B cell (primary cell): ENCODE measurements at regions of chr17 and their contacts with region 1.

Region 1: DNA sequence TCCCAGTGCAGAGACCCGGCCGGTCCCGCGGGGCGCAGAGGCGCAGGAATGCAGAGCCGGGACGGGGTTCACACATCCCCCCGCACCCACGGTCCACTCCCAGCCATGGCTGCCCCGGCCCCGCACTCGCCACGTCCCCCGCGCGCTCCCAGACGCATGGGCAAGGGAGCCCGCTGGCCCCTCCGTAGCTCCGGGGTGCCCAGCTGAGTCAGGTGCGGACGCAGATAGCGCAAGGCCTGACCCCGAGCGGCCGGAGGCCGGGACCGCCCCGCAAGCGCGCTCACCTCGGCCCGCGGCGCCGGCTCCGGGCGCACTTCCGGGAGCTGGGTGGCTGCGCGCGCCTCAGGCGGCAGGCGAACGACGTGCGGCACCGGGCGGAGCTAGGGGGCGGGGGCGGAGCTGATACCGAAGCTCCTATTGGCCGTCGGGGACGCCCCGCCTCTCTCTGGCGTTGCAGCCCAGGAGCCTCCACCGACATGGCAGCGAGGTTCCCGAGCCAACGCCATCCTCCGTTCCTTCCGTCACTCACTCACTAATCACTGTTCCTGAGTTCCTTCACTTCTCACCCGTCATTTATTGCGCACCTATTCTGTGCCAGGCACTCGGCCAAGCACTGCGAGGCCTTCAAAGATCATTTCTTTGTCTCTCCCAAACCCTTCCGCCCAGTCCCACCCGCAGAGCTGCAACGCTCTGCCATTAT is at the start of gene ZNF18:
- DNase-seq: peak; percentile 96
- ATAC-seq: peak; percentile 95
- H3K4me3 ChIP-seq: peak within 1 kb of the TSS; percentile 58 to 97 (median 92)
- H3K4me3 Mint-ChIP-seq: peak within 1 kb of the TSS; percentile 90
- H3K27ac ChIP-seq: peak within 1 kb of the TSS; percentile 81 to 87
- H3K27ac Mint-ChIP-seq: peak within 1 kb of the TSS; percentile 96
- H3K4me1 ChIP-seq: peaks cover 5 to 11% of the 10 kb centered on the region in 2 donors
- H3K4me1 Mint-ChIP-seq: peaks cover 16% of the 10 kb centered on the region
- H3K27me3 ChIP-seq: no peaks in the 10 kb centered on the region
- H3K27me3 Mint-ChIP-seq: no peaks in the 10 kb centered on the region
- CTCF ChIP-seq: no peak
- total RNA-seq, gene ZNF18: 10.5 and 12.0 TPM in 2 replicates

Region 2: DNA sequence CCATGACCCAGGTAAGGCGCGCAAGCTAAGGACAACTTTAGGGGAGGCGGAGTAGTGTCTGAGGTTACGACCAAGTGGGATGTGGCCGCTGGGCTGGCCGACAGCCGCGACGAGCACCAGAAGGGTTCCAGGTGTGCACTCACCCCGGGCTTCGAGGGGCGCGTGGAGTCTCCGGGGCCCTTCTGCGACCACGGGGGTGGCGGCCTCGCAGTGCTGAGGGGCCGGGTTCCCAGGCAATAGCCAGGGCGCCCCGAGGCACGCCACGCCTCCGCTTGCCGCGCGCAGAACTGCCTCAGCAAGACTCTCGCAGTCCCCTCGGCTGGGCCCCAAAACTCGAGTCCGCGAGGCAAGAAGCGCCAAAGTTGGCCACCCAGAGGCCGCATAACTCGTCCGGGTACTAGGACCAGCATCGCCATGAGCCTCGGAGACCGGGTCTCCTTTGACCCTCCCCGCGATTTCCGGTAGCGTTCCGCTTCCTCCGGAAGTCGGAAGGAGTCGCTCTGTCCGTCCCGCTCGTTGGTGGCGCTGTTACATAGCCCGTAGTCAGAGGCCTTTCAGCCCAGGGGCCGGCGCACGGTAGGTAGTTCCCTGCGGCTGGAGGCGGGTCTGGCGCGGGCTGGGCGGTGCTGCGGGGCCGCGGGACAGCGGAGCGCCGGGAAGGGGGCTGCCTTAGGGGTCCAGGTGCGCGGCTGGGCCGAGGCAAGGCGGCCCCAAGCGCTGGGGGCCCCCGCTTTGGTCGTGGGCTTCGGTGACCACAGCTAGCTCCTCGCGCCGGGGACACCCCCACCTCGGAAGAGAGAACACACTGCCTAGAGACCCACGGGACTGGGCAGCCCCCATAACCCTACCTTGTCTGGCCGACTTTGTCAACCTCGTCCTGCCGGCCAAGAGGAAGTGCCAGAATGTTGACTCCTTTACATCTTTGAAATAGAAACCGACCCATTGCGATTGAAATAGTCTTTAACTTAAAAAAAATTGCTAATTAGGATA is 1299.9 kb before region 1 on chr17 and contains the starts of genes ADPRM and SCO1:
- CTCF ChIA-PET with region 1: no interaction called
- POLR2A ChIA-PET with region 1: no interaction called
- intact Hi-C with region 1: loop called (anchors 5 kb)
- DNase-seq: peak; percentile 93
- ATAC-seq: peak; percentile 96
- H3K4me3 ChIP-seq: peak within 1 kb of the TSS; percentile 78 to 91 (median 84)
- H3K4me3 Mint-ChIP-seq: peak within 1 kb of the TSS; percentile 93
- H3K27ac ChIP-seq: peak within 1 kb of the TSS; percentile 81 to 93
- H3K27ac Mint-ChIP-seq: peak within 1 kb of the TSS; percentile 96
- H3K4me1 ChIP-seq: peaks cover 28 to 46% of the 10 kb centered on the region in 2 donors
- H3K4me1 Mint-ChIP-seq: peaks cover 47% of the 10 kb centered on the region
- H3K27me3 ChIP-seq: no peaks in the 10 kb centered on the region
- H3K27me3 Mint-ChIP-seq: no peaks in the 10 kb centered on the region
- CTCF ChIP-seq: peak; percentile 31
- total RNA-seq, gene ADPRM: 29.1 and 32.4 TPM in 2 replicates
- total RNA-seq, gene SCO1: 28.6 and 33.1 TPM in 2 replicates

Region 3: GRCh38 chr17:11122908-11123307 is 874.4 kb before region 1 on chr17:
- CTCF ChIA-PET with region 1: no interaction called
- POLR2A ChIA-PET with region 1: no interaction called
- intact Hi-C with region 1: no loop called
- DNase-seq: no peak
- ATAC-seq: no peak
- H3K4me3 ChIP-seq: no peak overlapping the region
- H3K4me3 Mint-ChIP-seq: no peak overlapping the region
- H3K27ac ChIP-seq: no peak overlapping the region
- H3K27ac Mint-ChIP-seq: no peak overlapping the region
- H3K4me1 ChIP-seq: no peaks in the 10 kb centered on the region
- H3K4me1 Mint-ChIP-seq: no peaks in the 10 kb centered on the region
- H3K27me3 ChIP-seq: no peaks in the 10 kb centered on the region
- H3K27me3 Mint-ChIP-seq: no peaks in the 10 kb centered on the region
- CTCF ChIP-seq: no peak

Region 4: GRCh38 chr17:11921296-11921695 is 76.0 kb before region 1 on chr17:
- CTCF ChIA-PET with region 1: no interaction called
- POLR2A ChIA-PET with region 1: no interaction called
- intact Hi-C with region 1: no loop called
- DNase-seq: no peak
- ATAC-seq: no peak
- H3K4me3 ChIP-seq: no peak overlapping the region
- H3K4me3 Mint-ChIP-seq: no peak overlapping the region
- H3K27ac ChIP-seq: no peak overlapping the region
- H3K27ac Mint-ChIP-seq: no peak overlapping the region
- H3K4me1 ChIP-seq: peaks cover 17 to 20% of the 10 kb centered on the region in 2 donors
- H3K4me1 Mint-ChIP-seq: peaks cover 15% of the 10 kb centered on the region
- H3K27me3 ChIP-seq: no peaks in the 10 kb centered on the region
- H3K27me3 Mint-ChIP-seq: peaks cover under 1% of the 10 kb centered on the region
- CTCF ChIP-seq: no peak

Region 5: GRCh38 chr17:11979795-11980194 is 17.5 kb before region 1 on chr17:
- CTCF ChIA-PET with region 1: no interaction called
- POLR2A ChIA-PET with region 1: no interaction called
- intact Hi-C with region 1: no loop called
- DNase-seq: no peak
- ATAC-seq: no peak
- H3K4me3 ChIP-seq: no peak overlapping the region
- H3K4me3 Mint-ChIP-seq: no peak overlapping the region
- H3K27ac ChIP-seq: no peak overlapping the region
- H3K27ac Mint-ChIP-seq: no peak overlapping the region
- H3K4me1 ChIP-seq: no peaks in the 10 kb centered on the region
- H3K4me1 Mint-ChIP-seq: no peaks in the 10 kb centered on the region
- H3K27me3 ChIP-seq: no peaks in the 10 kb centered on the region
- H3K27me3 Mint-ChIP-seq: no peaks in the 10 kb centered on the region
- CTCF ChIP-seq: no peak

Region 6: GRCh38 chr17:12020642-12021622 is 23.6 kb after region 1 on chr17 and contains the start of gene MAP2K4:
- CTCF ChIA-PET with region 1: interaction called, 21 read pairs
- POLR2A ChIA-PET with region 1: interaction called, 31 read pairs
- intact Hi-C with region 1: loop called (anchors 1 kb)
- DNase-seq: peak; percentile 96
- ATAC-seq: peak; percentile 96
- H3K4me3 ChIP-seq: peak within 1 kb of the TSS; percentile 34 to 70 (median 69)
- H3K4me3 Mint-ChIP-seq: peak within 1 kb of the TSS; percentile 83
- H3K27ac ChIP-seq: peak within 1 kb of the TSS in 1 of 2 donors; percentile 83
- H3K27ac Mint-ChIP-seq: peak within 1 kb of the TSS; percentile 88
- H3K4me1 ChIP-seq: peaks cover 14 to 15% of the 10 kb centered on the region in 2 donors
- H3K4me1 Mint-ChIP-seq: peaks cover 41% of the 10 kb centered on the region
- H3K27me3 ChIP-seq: peaks cover 0 to 2% (median 0%) of the 10 kb centered on the region in 4 experiments
- H3K27me3 Mint-ChIP-seq: peaks cover 5% of the 10 kb centered on the region
- CTCF ChIP-seq: no peak
- total RNA-seq, gene MAP2K4: 41.9 and 44.8 TPM in 2 replicates

Region 7: DNA sequence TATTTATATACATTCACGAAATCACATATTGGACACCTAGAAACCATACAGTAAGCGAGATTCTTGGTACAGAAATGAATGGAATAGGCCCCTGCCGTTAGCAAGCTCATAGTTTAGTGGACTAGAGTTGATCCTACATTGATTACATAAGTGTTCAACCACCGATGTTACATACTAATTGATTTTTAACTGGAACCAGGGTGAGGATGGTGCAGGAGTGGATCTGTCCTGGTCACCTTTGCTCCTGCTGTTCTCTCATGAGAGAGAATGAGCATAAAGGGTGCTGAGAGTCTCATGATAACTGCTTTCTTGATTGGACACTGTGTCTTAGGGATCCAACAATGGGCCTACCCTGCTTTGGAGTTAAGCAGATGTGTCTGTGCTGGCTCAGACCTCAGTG is 37.2 kb after region 1 on chr17:
- CTCF ChIA-PET with region 1: no interaction called
- POLR2A ChIA-PET with region 1: no interaction called
- intact Hi-C with region 1: loop called (anchors 5 kb)
- DNase-seq: no peak
- ATAC-seq: no peak
- H3K4me3 ChIP-seq: no peak overlapping the region
- H3K4me3 Mint-ChIP-seq: no peak overlapping the region
- H3K27ac ChIP-seq: no peak overlapping the region
- H3K27ac Mint-ChIP-seq: no peak overlapping the region
- H3K4me1 ChIP-seq: peaks cover 0 to 5% of the 10 kb centered on the region in 2 donors
- H3K4me1 Mint-ChIP-seq: peaks cover 27% of the 10 kb centered on the region
- H3K27me3 ChIP-seq: no peaks in the 10 kb centered on the region
- H3K27me3 Mint-ChIP-seq: no peaks in the 10 kb centered on the region
- CTCF ChIP-seq: no peak

Region 8: GRCh38 chr17:12097326-12097725 is 100.0 kb after region 1 on chr17:
- CTCF ChIA-PET with region 1: no interaction called
- POLR2A ChIA-PET with region 1: no interaction called
- intact Hi-C with region 1: loop called (anchors 2 kb)
- DNase-seq: no peak
- ATAC-seq: no peak
- H3K4me3 ChIP-seq: no peak overlapping the region
- H3K4me3 Mint-ChIP-seq: no peak overlapping the region
- H3K27ac ChIP-seq: no peak overlapping the region
- H3K27ac Mint-ChIP-seq: no peak overlapping the region
- H3K4me1 ChIP-seq: peaks cover 4 to 5% of the 10 kb centered on the region in 2 donors
- H3K4me1 Mint-ChIP-seq: peaks cover 9% of the 10 kb centered on the region
- H3K27me3 ChIP-seq: no peaks in the 10 kb centered on the region
- H3K27me3 Mint-ChIP-seq: no peaks in the 10 kb centered on the region
- CTCF ChIP-seq: no peak